Brain microvascular endothelial cell (primary cell): ENCODE measurements at regions of chr2 and their contacts with region 1.

Region 1: DNA sequence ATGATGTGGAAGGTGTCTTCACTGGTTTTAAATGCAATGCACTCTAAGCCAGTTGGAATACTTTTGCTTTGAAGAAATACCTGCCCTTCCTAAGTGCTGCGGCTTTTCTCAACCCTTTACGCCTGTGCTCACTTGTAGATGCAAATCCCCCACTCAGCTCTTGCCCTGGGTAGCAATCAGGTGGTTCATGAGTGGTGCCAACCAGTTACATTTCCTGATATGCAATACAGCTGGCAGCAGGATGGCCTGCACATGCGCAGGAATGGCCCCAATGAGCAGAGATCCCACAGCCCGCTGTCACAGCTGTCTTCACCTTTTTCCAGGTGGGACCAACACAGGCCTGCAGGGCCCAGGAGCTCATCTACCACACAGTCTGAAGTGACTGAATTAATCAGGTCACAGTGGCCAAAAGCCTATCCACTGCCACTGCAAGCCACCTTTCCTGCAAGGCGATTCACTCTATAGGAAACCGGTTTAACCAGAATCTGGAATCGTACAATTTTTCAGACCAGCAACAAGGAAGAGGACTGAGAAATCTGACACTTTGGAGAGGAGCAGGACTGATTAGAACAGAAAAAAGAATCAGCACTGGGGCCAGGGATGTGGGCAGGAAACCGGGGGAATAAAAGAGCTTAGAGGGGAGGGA is 247.8 kb downstream of the MYT1L start:
- DNase-seq: no peak
- H3K4me3 ChIP-seq: no peak overlapping the region
- H3K27ac ChIP-seq: no peak overlapping the region
- H3K27me3 ChIP-seq: no peaks in the 10 kb centered on the region
- CTCF ChIP-seq: no peak

Region 2: GRCh38 chr2:1910592-1911246 is 172.5 kb before region 1 on chr2:
- in situ Hi-C with region 1: loop called (anchors 25 kb)
- DNase-seq: peak; percentile 43
- H3K4me3 ChIP-seq: no peak overlapping the region
- H3K27ac ChIP-seq: no peak overlapping the region
- H3K27me3 ChIP-seq: no peaks in the 10 kb centered on the region
- CTCF ChIP-seq: peak; percentile 66